H1 (cell line): ENCODE measurements at regions of chr3 and their contacts with region 1.

Region 1: GRCh38 chr3:37537914-37538691 is 323.6 kb upstream of the CTDSPL start:
- DNase-seq: no peak
- H3K4me3 ChIP-seq: no peak overlapping the region
- H3K27ac ChIP-seq: no peak overlapping the region
- H3K4me1 ChIP-seq: peaks cover 0 to 2% (median 0%) of the 10 kb centered on the region in 4 experiments; a peak in 1 of 7 replicates
- H3K27me3 ChIP-seq: no peaks in the 10 kb centered on the region
- CTCF ChIP-seq: no peak
- EP300 ChIP-seq: no peak
- POLR2A ChIP-seq: no peak
- RAD21 ChIP-seq: no peak

Region 2: GRCh38 chr3:37386627-37387230 is 151.4 kb before region 1 on chr3:
- CTCF ChIA-PET with region 1: no interaction called
- POLR2A ChIA-PET with region 1: no interaction called
- DNase-seq: no peak
- H3K4me3 ChIP-seq: no peak overlapping the region
- H3K27ac ChIP-seq: no peak overlapping the region
- H3K4me1 ChIP-seq: no peaks in the 10 kb centered on the region
- H3K27me3 ChIP-seq: no peaks in the 10 kb centered on the region
- CTCF ChIP-seq: no peak
- EP300 ChIP-seq: no peak
- POLR2A ChIP-seq: no peak
- RAD21 ChIP-seq: no peak

Region 3: DNA sequence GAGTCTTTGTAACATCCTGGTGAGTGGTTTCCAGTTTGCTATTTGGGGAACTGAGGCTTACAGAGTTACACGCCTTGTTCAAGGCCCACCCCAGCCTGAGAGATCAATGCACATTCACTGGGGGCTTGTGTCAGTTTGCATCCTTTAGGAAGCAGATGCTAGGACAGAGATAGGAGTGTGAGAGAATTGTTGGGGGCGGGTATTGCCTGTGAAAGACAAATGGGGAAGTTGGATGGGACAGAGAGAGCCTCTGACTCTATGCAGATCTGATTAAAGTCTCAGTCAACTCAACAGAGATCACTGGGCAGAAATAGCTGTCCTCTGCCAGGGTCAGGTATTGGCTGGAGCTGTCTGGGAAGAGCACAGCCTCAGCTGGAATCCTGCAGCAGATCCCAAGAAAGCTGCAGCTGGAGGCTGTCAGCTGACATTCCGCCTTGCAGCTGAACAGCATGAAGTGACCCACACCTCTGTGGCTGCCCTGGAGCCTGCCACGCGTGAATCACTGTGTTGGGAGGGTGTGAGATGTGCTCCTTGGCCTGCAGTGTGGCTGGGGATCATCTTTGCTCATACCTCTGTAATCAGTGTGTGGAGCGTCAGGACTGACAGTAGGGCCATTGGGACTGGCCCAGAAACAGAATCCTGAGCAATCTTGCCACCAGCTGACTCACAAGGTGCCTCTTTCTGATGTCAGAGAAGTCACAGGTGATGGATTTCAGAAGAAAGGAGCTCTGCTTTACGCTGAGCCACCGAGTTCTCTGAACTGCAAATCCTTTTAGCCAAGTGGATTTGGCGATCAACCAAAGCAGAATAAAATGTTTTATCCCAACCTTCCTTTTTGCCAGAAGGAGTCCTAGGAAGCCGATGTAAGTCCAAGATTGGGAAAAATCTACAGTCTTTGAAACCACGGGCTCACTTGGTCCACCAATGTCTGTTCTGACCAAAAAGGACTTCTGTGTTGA is 79.7 kb before region 1 on chr3:
- CTCF ChIA-PET with region 1: interaction called, 11 read pairs
- POLR2A ChIA-PET with region 1: no interaction called
- DNase-seq: no peak
- H3K4me3 ChIP-seq: no peak overlapping the region
- H3K27ac ChIP-seq: no peak overlapping the region
- H3K4me1 ChIP-seq: peaks cover 0 to 7% (median 3%) of the 10 kb centered on the region in 4 experiments; a peak in 5 of 7 replicates
- H3K27me3 ChIP-seq: peaks cover 0 to 6% (median 5%) of the 10 kb centered on the region in 4 experiments; a peak in 6 of 7 replicates
- CTCF ChIP-seq: no peak
- EP300 ChIP-seq: no peak
- POLR2A ChIP-seq: no peak
- RAD21 ChIP-seq: no peak

Region 4: GRCh38 chr3:37511463-37511920 is 26.6 kb before region 1 on chr3:
- CTCF ChIA-PET with region 1: no interaction called
- POLR2A ChIA-PET with region 1: no interaction called
- DNase-seq: no peak
- H3K4me3 ChIP-seq: no peak overlapping the region
- H3K27ac ChIP-seq: no peak overlapping the region
- H3K4me1 ChIP-seq: no peaks in the 10 kb centered on the region
- H3K27me3 ChIP-seq: no peaks in the 10 kb centered on the region
- CTCF ChIP-seq: no peak
- EP300 ChIP-seq: no peak
- POLR2A ChIP-seq: no peak
- RAD21 ChIP-seq: no peak

Region 5: DNA sequence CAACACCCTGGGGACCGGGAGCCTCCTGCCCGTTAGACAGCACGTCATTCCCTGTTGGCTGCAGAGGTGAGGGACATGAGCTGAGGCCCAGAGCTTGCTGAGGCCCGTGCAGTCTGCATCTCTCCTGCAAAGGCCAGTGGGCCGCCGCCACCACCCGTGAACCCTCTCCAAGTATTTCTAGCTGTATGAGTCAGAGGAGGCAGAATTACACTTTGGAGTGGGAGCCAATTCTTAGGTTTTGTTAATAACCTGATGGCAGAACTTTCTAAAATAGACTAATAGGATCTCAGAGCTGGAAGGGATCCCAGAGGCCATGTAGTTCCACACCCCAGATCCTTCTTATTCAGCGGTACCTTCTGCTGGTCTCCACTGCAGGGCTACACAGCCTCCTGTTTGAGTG is 11.6 kb before region 1 on chr3:
- CTCF ChIA-PET with region 1: interaction called, 10 read pairs
- POLR2A ChIA-PET with region 1: no interaction called
- DNase-seq: no peak
- H3K4me3 ChIP-seq: no peak overlapping the region
- H3K27ac ChIP-seq: no peak overlapping the region
- H3K4me1 ChIP-seq: no peaks in the 10 kb centered on the region
- H3K27me3 ChIP-seq: no peaks in the 10 kb centered on the region
- CTCF ChIP-seq: no peak
- EP300 ChIP-seq: no peak
- POLR2A ChIP-seq: no peak
- RAD21 ChIP-seq: no peak

Region 6: DNA sequence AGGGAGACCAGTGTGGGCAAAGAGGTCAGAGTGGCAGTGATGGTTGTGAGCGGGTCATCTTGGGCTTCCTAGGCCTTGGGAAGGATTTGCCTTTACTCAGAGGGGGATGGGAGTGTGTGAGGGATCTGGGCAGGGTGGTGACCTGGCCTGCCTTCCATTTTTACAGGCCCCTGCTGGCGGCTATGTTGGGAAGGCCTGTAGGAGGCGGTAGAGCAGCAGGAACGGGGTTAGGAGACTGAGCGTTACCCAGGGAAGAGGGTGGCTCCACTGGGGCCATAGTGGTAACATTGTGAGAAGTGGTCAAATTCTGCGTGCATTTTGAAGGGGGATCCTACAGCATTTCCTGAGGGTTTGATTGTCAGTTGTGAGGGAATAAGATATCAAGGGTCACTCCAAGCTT is 16.3 kb after region 1 on chr3:
- CTCF ChIA-PET with region 1: interaction called, 14 read pairs
- POLR2A ChIA-PET with region 1: interaction called, 4 read pairs
- DNase-seq: peak in 1 of 2 experiments; percentile 81
- H3K4me3 ChIP-seq: no peak overlapping the region
- H3K27ac ChIP-seq: no peak overlapping the region
- H3K4me1 ChIP-seq: peaks cover 0 to 7% (median 1%) of the 10 kb centered on the region in 4 experiments; a peak in 6 of 7 replicates
- H3K27me3 ChIP-seq: no peaks in the 10 kb centered on the region
- CTCF ChIP-seq: peak; percentile 74 to 93 (median 79)
- EP300 ChIP-seq: no peak
- POLR2A ChIP-seq: no peak
- RAD21 ChIP-seq: peak; percentile 87 to 90